ENCODE measurements at regions of chr6 and their contacts with region 1.

Region 1: DNA sequence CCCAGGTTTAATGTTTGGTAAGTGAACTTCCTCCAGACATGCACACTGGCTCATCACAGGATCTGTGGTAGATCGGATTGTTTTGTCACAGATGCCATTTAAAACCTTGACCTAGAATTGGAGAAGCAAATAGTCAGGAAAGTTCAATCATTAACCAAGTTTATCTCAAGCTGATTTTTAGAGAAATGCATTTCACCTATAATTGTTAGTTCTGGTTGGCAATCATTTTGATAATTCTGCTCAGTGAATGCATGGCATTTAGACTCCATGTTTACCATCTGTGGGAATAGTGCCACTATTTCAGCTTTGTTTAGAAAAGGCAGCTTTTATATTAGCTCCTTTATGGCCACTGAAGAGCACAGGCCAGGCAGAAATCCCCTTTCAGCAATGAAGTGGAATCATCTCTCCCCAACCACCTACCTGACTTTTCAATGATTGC is 73.9 kb upstream of the IPCEF1 start:
- DNase-seq: no peak
- H3K4me3 Mint-ChIP-seq: no peak overlapping the region
- H3K27ac Mint-ChIP-seq: no peak overlapping the region
- H3K4me1 Mint-ChIP-seq: no peaks in the 10 kb centered on the region
- H3K27me3 Mint-ChIP-seq: peaks cover 4% of the 10 kb centered on the region

Region 2: GRCh38 chr6:154410619-154411072 is 19.9 kb before region 1 on chr6:
- CTCF ChIA-PET with region 1: no interaction called
- POLR2A ChIA-PET with region 1: no interaction called
- DNase-seq: no peak
- H3K4me3 Mint-ChIP-seq: no peak overlapping the region
- H3K27ac Mint-ChIP-seq: no peak overlapping the region
- H3K4me1 Mint-ChIP-seq: peaks cover 2% of the 10 kb centered on the region
- H3K27me3 Mint-ChIP-seq: peaks cover 5% of the 10 kb centered on the region

Region 3: DNA sequence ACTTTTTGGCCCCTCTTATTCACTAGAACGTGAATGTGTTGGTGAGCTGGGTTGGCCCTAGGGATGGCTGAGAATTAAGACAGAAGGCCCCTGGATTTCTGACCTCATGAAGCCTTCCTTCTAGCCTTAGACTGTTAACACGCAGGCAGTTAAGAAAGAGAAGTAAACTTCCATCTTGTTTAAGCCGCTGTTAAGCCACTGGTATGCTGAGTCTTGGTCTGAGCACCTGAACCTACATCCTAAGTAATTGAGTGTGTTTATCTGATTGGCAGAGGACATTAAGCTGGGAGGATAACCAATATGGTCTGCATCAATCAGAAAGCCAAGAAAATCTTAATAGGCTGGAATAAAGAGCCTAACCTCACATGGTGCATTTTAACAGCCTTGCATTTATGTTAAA is 1811.7 kb after region 1 on chr6:
- CTCF ChIA-PET with region 1: no interaction called
- POLR2A ChIA-PET with region 1: interaction called, 18 read pairs
- DNase-seq: no peak
- H3K4me3 Mint-ChIP-seq: no peak overlapping the region
- H3K27ac Mint-ChIP-seq: no peak overlapping the region
- H3K4me1 Mint-ChIP-seq: no peaks in the 10 kb centered on the region
- H3K27me3 Mint-ChIP-seq: no peaks in the 10 kb centered on the region

Measured in activated CD4-positive, alpha-beta T cell treated with anti-CD3 and anti-CD28 coated beads, Interleukin-2, amount 10 ng/mL, durations not matched to agents 7 days and 5 days (primary cell).